ENCODE measurements at regions of chr12 and their contacts with region 1.

Region 1: GRCh38 chr12:3073438-3074250 is 3.5 kb upstream of the TSPAN9 start:
- DNase-seq: peak; percentile 85
- ATAC-seq: peak; percentile 53
- H3K4me3 ChIP-seq: no peak overlapping the region
- H3K4me3 Mint-ChIP-seq: peak overlapping the region; percentile 34
- H3K27ac ChIP-seq: no peak overlapping the region
- H3K27ac Mint-ChIP-seq: no peak overlapping the region
- H3K4me1 ChIP-seq: peaks cover 19 to 20% of the 10 kb centered on the region in 2 donors
- H3K4me1 Mint-ChIP-seq: peaks cover 15% of the 10 kb centered on the region
- H3K27me3 ChIP-seq: peaks cover 0 to 29% (median 13%) of the 10 kb centered on the region in 4 experiments
- H3K27me3 Mint-ChIP-seq: peaks cover 14% of the 10 kb centered on the region
- CTCF ChIP-seq: peak; percentile 99

Region 2: GRCh38 chr12:2884810-2885209 is 188.8 kb before region 1 on chr12:
- CTCF ChIA-PET with region 1: no interaction called
- POLR2A ChIA-PET with region 1: no interaction called
- intact Hi-C with region 1: loop called (anchors 5 kb)
- DNase-seq: no peak
- ATAC-seq: no peak
- H3K4me3 ChIP-seq: no peak overlapping the region
- H3K4me3 Mint-ChIP-seq: no peak overlapping the region
- H3K27ac ChIP-seq: peak overlapping the region in 1 of 2 donors; percentile 51
- H3K27ac Mint-ChIP-seq: peak overlapping the region; percentile 68
- H3K4me1 ChIP-seq: peaks cover 7 to 9% of the 10 kb centered on the region in 2 donors
- H3K4me1 Mint-ChIP-seq: peaks cover 22% of the 10 kb centered on the region
- H3K27me3 ChIP-seq: no peaks in the 10 kb centered on the region
- H3K27me3 Mint-ChIP-seq: no peaks in the 10 kb centered on the region
- CTCF ChIP-seq: no peak

Region 3: DNA sequence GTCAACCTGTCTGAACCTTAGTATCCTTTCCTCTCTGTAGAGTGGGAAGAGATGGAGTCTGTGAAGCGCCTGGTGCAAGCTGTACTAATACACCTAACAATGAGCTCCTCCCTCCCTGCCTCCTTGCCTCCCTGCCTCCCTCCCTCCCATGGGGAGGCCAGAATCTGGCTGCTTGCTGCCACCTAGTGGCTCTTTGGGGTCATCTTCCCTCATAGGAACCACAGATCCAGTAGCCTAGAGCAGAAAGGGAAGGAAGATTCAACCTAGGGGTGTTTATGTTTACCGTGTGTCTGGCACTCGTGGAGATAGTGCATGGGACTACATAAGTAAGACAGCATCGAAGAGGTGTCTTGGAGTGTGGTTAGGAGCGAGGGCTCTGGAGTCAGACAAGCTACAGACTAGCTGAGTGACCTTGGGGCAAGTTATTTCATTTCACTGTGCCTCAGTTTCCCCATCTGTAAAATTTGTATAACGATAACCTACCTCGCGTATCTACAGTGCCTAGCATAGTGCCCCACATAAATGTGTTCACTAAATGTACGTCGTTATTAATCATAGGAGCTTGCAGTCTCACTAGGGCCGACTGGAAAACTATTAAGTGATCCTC is 32.0 kb before region 1 on chr12:
- CTCF ChIA-PET with region 1: interaction called, 12 read pairs
- POLR2A ChIA-PET with region 1: interaction called, 3 read pairs
- intact Hi-C with region 1: loop called (anchors 2 kb)
- DNase-seq: peak; percentile 70
- ATAC-seq: peak; percentile 52
- H3K4me3 ChIP-seq: no peak overlapping the region
- H3K4me3 Mint-ChIP-seq: peak overlapping the region; percentile 44
- H3K27ac ChIP-seq: no peak overlapping the region
- H3K27ac Mint-ChIP-seq: peak overlapping the region; percentile 53
- H3K4me1 ChIP-seq: peaks cover 17% of the 10 kb centered on the region in 2 donors
- H3K4me1 Mint-ChIP-seq: peaks cover 30% of the 10 kb centered on the region
- H3K27me3 ChIP-seq: peaks cover 0 to 24% (median 5%) of the 10 kb centered on the region in 4 experiments
- H3K27me3 Mint-ChIP-seq: peaks cover 36% of the 10 kb centered on the region
- CTCF ChIP-seq: peak; percentile 56

Region 4: DNA sequence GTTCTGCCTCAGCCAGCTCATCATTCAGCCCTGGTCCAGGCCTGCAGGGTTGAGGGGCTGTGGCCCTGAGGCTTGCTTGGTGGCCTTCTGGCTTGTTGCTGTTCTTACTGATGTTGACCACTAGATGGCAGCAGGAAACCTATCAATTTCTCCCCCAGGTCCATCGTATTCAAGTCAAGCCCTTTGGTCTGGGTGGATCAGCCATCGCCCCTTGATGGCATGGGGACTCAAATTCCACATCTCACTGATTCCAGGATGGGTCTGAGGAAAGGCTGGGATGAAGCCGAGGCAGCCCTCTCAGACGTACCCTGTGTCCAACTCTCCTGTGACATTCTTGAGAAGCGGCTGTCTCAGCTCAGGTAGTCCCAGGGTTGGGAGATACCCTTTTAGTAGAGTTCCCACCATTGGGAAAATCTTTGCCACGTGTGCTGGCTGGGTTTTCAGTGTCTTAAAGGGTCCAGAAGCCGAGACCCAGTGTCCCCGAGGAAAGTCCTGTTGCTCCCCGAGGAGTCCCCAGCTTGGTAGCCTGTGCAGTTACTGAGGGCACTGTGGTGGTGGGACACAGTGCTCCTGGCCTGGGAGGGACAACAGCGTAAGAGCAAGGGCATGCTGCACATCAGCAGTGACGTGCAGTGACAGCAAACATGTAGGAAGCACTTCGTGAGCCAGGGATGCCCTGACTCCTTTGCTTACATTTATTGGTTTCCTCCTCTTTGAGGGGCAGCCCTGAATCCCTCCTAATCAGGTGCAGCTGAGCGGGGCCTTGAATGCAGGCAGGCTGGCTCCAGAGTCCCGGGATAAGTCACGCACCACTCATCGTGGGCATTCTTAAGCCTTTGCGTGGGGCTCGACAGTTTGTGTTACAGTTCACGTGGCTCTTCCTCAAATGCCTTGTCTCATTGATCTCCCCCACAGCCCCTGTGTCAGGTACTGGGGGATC is 62.1 kb after region 1 on chr12:
- CTCF ChIA-PET with region 1: no interaction called
- POLR2A ChIA-PET with region 1: no interaction called
- intact Hi-C with region 1: loop called (anchors 1 kb)
- DNase-seq: peak; percentile 75
- ATAC-seq: peak; percentile 75
- H3K4me3 ChIP-seq: no peak overlapping the region
- H3K4me3 Mint-ChIP-seq: no peak overlapping the region
- H3K27ac ChIP-seq: no peak overlapping the region
- H3K27ac Mint-ChIP-seq: no peak overlapping the region
- H3K4me1 ChIP-seq: no peaks in the 10 kb centered on the region
- H3K4me1 Mint-ChIP-seq: no peaks in the 10 kb centered on the region
- H3K27me3 ChIP-seq: peaks cover 0 to 15% (median 2%) of the 10 kb centered on the region in 4 experiments
- H3K27me3 Mint-ChIP-seq: peaks cover 45% of the 10 kb centered on the region
- CTCF ChIP-seq: peak; percentile 83

Region 5: DNA sequence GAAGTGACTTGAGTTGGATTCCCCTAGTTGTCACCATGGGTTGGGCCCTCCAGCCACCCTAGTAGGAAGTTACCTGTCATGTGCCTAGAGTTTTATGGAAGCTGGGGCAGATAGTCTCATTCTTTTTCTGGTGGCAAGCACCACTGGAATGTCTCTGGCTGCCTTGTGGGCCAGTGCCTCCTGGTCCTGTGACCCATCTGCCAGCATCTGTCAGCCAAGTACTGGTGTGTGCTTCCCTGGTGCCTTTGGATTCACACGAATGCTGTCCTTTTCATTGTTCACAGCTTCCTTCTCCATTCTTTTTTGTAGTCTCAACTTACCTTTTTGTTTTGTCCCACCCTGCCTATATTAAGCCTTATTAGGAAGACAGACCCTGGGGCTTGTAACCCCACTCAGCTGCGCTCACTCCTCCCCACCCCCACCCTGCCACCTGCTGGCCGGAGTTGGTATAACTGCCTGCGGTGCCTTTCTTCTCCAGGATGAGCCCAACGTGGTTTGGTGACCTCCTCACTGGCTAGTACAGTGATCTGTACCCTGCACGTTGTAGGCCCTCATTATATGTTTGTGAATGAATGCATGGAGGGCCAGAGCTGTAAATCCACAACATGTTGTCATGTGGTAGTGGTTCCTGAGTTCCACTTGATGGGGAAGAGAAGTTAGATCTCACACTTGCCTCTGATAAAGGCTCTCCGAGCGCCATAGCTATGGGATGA is 129.2 kb after region 1 on chr12:
- CTCF ChIA-PET with region 1: interaction called, 3 read pairs
- POLR2A ChIA-PET with region 1: no interaction called
- intact Hi-C with region 1: loop called (anchors 2 kb)
- DNase-seq: peak; percentile 55
- ATAC-seq: no peak
- H3K4me3 ChIP-seq: no peak overlapping the region
- H3K4me3 Mint-ChIP-seq: no peak overlapping the region
- H3K27ac ChIP-seq: no peak overlapping the region
- H3K27ac Mint-ChIP-seq: no peak overlapping the region
- H3K4me1 ChIP-seq: peaks cover 15 to 36% of the 10 kb centered on the region in 2 donors
- H3K4me1 Mint-ChIP-seq: peaks cover 11% of the 10 kb centered on the region
- H3K27me3 ChIP-seq: peaks cover 0 to 44% (median 19%) of the 10 kb centered on the region in 4 experiments
- H3K27me3 Mint-ChIP-seq: peaks cover 47% of the 10 kb centered on the region
- CTCF ChIP-seq: peak; percentile 75

Region 6: GRCh38 chr12:3275171-3276041 is 201.8 kb after region 1 on chr12:
- CTCF ChIA-PET with region 1: interaction called, 22 read pairs
- POLR2A ChIA-PET with region 1: no interaction called
- intact Hi-C with region 1: no loop called
- DNase-seq: peak; percentile 71
- ATAC-seq: peak; percentile 54
- H3K4me3 ChIP-seq: no peak overlapping the region
- H3K4me3 Mint-ChIP-seq: no peak overlapping the region
- H3K27ac ChIP-seq: no peak overlapping the region
- H3K27ac Mint-ChIP-seq: no peak overlapping the region
- H3K4me1 ChIP-seq: peaks cover 0 to 4% of the 10 kb centered on the region in 2 donors
- H3K4me1 Mint-ChIP-seq: no peaks in the 10 kb centered on the region
- H3K27me3 ChIP-seq: peaks cover 0 to 9% (median 0%) of the 10 kb centered on the region in 4 experiments
- H3K27me3 Mint-ChIP-seq: peaks cover 27% of the 10 kb centered on the region
- CTCF ChIP-seq: peak; percentile 90

Measured in B cell (primary cell).